ENCODE measurements at regions of chr11 and their contacts with region 1.

Region 1: DNA sequence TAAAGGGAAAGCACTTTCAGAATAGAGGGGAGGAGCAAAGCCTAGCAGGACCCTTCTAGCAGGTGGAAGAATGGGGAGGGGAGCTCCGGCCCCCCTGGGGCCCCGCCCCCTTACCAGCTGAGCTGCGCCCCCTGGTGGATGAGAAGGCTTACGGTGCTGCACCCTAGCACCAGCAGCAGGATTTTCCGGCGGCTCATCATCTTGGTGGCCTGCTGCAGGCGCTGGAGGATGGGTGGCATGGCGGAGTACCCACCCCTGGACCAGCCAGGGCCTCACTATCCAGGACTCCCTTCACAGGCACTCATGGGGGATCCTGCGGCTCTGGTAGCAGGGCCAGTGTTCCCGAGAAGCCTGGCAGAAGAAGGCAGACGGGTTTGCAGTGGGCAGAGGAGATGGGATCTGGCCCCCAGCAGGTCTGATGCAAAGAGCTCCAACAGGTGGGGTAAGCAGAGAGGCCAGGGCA is 3.8 kb downstream of the GAL3ST3 start:
- DNase-seq: peak; percentile 79
- H3K4me3 Mint-ChIP-seq: no peak overlapping the region
- H3K27ac Mint-ChIP-seq: peak overlapping the region; percentile 11
- H3K4me1 Mint-ChIP-seq: peaks cover 16% of the 10 kb centered on the region
- H3K27me3 Mint-ChIP-seq: peaks cover 7% of the 10 kb centered on the region

Region 2: GRCh38 chr11:66022401-66023185 is 22.6 kb before region 1 on chr11:
- intact Hi-C with region 1: loop called (anchors 1 kb)
- DNase-seq: peak; percentile 73
- H3K4me3 Mint-ChIP-seq: peak overlapping the region; percentile 12
- H3K27ac Mint-ChIP-seq: no peak overlapping the region
- H3K4me1 Mint-ChIP-seq: peaks cover 8% of the 10 kb centered on the region
- H3K27me3 Mint-ChIP-seq: peaks cover 8% of the 10 kb centered on the region

Measured in activated T-helper 1 cell treated with anti-CD3 and anti-CD28 coated beads, Interleukin-12 subunit alpha, Interleukin-12 subunit beta, Interleukin-2, Interleukin-4 antibody, amounts not matched to agents 30 ng/mL and 10 ng/mL and 1 ng/mL, durations not matched to agents 14 hours and 24 hours and 36 hours (primary cell).